Activated CD4-positive, alpha-beta T cell treated with anti-CD3 and anti-CD28 coated beads, Interleukin-2, amount 10 ng/mL, durations not matched to agents 24 days and 14 days (primary cell): ENCODE measurements at regions of chr1 and their contacts with region 1.

Region 1: DNA sequence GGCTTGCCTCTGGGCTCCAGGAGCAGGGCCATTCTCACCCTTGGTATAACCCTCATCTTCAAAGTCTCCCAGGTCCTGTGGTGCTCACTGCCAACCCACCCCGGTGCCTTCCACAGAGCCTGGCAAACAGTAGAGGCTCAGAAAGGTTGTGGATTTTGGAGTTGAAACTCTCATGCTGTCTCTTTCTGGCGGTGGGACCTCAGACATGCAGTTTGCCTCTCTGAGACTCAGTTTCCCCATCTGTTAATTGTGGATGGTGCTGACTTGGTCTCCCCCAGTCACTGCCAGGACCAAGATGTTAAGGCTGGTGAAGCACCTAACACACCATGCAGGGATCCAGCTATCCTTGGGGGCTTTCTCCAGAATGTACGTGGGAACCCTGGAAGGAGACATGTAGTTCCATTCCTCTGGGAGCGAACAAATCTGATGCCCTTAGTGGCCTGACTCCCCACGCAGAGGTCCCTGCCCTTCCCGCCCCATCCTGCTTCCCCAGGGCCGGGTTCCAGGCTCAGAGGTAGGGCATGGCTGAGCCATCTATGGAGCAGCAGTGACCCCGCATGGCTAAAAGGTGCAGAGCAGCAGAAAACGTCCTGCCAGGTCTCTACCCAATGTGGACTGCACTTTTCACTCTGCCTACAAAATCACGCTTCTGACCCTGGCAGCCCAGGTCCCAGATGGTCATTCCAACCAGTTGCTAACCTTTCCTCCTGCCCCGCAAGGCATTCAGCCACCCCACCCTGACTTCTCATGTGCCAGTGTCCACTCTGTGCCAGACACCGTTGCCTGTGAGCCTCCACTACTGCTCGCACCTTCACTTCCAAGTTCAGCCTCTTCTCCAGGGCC is 9.2 kb upstream of the TTC22 start:
- DNase-seq: peak; percentile 92
- H3K4me3 Mint-ChIP-seq: no peak overlapping the region
- H3K27ac Mint-ChIP-seq: no peak overlapping the region
- H3K4me1 Mint-ChIP-seq: peaks cover 19% of the 10 kb centered on the region
- H3K27me3 Mint-ChIP-seq: no peaks in the 10 kb centered on the region

Region 2: DNA sequence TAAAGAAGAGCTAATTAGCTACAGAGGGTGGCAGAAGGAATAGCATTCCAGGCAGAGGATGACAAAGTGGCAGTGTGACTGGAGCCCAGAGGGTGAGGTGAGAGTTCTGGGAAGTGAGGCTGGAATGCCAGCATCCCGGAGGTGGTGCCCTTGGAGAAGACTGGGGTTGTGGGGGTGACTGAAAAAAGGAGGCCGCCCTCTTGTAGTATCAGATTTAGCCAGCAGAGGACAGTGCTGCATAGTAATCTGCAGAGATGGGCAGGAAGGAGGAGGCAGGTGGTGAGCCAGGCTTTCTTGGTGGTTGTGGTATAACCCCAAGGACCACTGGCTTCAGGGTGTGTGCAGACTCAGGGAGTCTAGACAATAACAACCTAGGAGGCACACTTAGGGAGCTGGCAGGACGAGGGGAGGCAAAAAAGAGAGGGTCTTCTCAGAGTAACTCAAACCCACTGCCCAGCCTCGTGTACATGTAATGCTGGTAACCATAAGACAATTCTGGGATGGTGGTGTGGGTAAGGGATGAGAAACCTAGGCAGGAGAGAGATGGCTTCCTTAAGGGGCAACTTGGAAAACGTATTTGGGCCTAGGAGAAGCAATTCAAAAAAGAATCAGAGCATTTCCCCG is 138.2 kb before region 1 on chr1:
- intact Hi-C with region 1: loop called (anchors 1 kb)
- DNase-seq: peak; percentile 92
- H3K4me3 Mint-ChIP-seq: no peak overlapping the region
- H3K27ac Mint-ChIP-seq: no peak overlapping the region
- H3K4me1 Mint-ChIP-seq: peaks cover 6% of the 10 kb centered on the region
- H3K27me3 Mint-ChIP-seq: peaks cover 3% of the 10 kb centered on the region

Region 3: DNA sequence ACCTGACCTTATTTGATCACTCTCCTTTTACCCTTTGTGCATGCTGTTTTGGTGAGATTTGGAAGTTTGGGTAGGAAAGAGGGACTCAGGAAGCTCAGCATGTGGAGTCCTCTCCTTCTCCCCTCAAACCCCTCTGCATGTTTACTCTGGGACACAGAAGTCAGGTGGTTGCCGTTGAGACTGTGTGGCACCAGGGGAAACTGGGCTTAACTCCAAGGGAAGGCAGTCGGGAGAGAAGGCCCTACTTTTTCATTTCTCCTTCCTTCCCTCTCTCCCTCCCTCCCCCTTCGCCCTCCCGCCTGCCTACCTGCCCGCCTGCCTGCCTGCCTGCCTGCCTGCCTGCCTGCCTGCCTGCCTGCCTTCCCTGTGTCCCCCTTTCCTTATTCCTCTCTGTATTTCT is 25.6 kb after region 1 on chr1:
- intact Hi-C with region 1: no loop called
- DNase-seq: no peak
- H3K4me3 Mint-ChIP-seq: no peak overlapping the region
- H3K27ac Mint-ChIP-seq: no peak overlapping the region
- H3K4me1 Mint-ChIP-seq: no peaks in the 10 kb centered on the region
- H3K27me3 Mint-ChIP-seq: peaks cover 4% of the 10 kb centered on the region